Activated CD4-positive, alpha-beta memory T cell treated with anti-CD3 and anti-CD28 coated beads for 36 hours (primary cell): ENCODE measurements at regions of chr5 and their contacts with region 1.

Region 1: GRCh38 chr5:93909356-93909755 is 168.0 kb upstream of the POU5F2 start:
- DNase-seq: no peak
- H3K4me3 Mint-ChIP-seq: no peak overlapping the region
- H3K27ac Mint-ChIP-seq: no peak overlapping the region
- H3K4me1 Mint-ChIP-seq: no peaks in the 10 kb centered on the region
- H3K27me3 Mint-ChIP-seq: no peaks in the 10 kb centered on the region

Region 2: DNA sequence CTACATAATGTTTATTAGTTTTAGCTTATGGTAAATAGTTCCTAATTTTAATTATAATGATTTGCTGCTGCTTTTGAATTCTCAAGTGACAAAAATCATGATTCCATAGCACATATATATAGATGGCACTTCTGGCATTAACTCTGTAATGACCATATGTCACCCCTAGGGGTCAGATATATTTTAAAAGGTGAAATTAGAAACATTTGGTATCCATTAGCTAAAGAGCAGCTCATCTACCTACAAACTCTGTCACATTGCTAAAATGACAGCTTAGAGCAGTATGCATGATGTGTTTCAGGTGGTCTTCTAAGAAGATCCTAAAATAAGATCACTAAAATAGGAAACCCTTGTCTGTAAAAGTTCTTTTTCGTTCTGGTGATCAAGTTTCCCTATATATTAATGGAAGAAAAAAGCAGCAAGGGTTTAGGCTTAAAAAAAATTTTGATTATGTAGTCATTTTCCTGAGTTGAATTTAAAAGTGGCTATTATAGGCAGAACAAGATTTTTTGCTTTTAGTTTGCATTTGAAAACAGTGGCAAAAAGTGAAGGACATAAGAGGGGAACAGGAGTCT is 10.2 kb before region 1 on chr5:
- CTCF ChIA-PET with region 1: interaction called, 17 read pairs
- POLR2A ChIA-PET with region 1: no interaction called
- intact Hi-C with region 1: no loop called
- DNase-seq: no peak
- H3K4me3 Mint-ChIP-seq: no peak overlapping the region
- H3K27ac Mint-ChIP-seq: no peak overlapping the region
- H3K4me1 Mint-ChIP-seq: no peaks in the 10 kb centered on the region
- H3K27me3 Mint-ChIP-seq: no peaks in the 10 kb centered on the region